ENCODE measurements at regions of chr6 and their contacts with region 1.

Region 1: DNA sequence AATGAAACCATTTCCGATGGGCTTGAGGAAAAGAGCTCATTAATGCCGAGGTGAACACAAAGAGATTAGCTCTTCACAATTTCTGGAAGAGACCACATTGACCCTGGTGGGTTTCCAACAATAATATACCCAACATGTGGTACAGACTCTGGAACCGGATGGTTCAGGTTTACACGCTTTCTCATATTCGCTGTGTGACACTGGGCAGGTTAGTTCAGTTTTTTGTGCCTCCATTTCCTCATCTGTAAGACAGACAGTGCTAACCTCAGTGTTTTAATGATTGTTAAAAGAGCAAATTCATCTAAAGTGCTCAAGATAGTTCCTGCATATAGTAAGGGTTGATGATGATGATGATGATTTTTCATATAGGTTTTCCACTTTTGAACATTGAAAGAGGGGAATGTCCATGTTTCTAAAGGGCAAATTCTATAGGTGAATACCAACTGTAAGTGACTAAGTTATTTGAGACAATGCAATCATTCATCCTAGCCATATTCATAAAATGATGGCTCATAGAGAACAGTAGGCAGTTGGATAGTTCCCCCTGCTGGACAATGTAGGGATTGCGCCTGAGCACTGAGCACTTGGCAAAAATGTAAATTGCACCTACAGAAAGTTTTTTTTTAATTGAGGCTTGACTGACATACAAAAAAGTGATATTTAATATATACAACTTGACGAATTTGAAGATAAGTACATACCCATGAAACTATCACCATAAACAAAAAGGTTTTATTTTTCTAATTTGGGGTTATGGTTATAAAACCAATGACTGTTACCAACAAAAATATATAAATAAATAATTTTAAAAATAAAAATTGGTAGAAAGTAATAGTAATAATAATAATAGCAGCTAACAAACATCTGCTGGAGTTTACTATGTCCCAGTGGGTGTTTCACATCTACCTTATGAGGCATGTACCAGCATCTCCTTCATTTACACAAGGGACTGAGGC is 2.1 kb upstream of the PERP start:
- DNase-seq: peak; percentile 50
- ATAC-seq: peak; percentile 73
- H3K4me3 Mint-ChIP-seq: peak overlapping the region; percentile 39
- H3K27ac Mint-ChIP-seq: no peak overlapping the region
- H3K4me1 Mint-ChIP-seq: peaks cover 17% of the 10 kb centered on the region
- H3K27me3 Mint-ChIP-seq: peaks cover 28% of the 10 kb centered on the region
- CTCF ChIP-seq: peak; percentile 93

Region 2: GRCh38 chr6:137497721-137498463 is 611.4 kb before region 1 on chr6:
- CTCF ChIA-PET with region 1: no interaction called
- POLR2A ChIA-PET with region 1: no interaction called
- intact Hi-C with region 1: loop called (anchors 5 kb)
- DNase-seq: peak; percentile 37
- ATAC-seq: peak; percentile 34
- H3K4me3 Mint-ChIP-seq: peak overlapping the region; percentile 66
- H3K27ac Mint-ChIP-seq: no peak overlapping the region
- H3K4me1 Mint-ChIP-seq: peaks cover 44% of the 10 kb centered on the region
- H3K27me3 Mint-ChIP-seq: peaks cover 61% of the 10 kb centered on the region
- CTCF ChIP-seq: no peak

Region 3: DNA sequence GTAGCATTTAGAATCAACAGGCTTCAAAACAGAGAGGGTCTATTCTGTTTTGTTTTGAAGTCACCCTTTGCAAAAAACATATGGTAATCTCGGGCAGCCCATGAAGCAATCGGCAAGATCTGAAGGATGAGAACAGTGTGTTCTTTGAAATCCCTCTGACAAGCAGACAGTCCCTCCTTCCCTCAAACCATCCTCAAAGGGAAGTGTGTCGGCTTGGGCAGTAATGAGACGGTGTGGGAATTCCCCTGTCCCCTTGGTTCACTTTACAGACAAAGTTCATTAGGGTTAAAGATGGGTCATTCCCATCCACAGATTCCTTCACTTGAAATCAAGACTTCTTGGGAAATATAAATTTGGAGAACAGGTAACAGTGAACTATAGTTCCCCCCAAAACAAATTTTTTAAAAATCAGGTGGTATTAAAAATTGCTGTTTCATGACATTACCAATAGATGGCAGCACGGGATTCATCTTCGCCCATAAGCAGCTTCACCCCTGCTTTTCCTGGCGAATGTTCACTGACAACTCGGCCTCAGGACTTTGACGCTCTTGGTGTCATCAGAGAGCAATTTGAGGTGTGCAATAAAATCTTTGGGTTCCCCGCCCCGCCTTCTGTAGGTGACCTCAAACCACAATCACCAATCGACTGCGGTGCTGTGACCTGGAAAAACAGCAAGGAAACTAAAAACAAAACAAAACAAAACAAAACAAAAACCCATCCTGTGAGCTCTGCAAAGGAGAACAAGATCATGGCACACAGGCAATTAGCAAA is 401.5 kb before region 1 on chr6:
- CTCF ChIA-PET with region 1: interaction called, 6 read pairs
- POLR2A ChIA-PET with region 1: no interaction called
- intact Hi-C with region 1: loop called (anchors 1 kb)
- DNase-seq: peak; percentile 27
- ATAC-seq: peak; percentile 75
- H3K4me3 Mint-ChIP-seq: peak overlapping the region; percentile 57
- H3K27ac Mint-ChIP-seq: peak overlapping the region; percentile 85
- H3K4me1 Mint-ChIP-seq: peaks cover 59% of the 10 kb centered on the region
- H3K27me3 Mint-ChIP-seq: no peaks in the 10 kb centered on the region
- CTCF ChIP-seq: peak; percentile 38

Region 4: GRCh38 chr6:137873273-137873762 is 236.0 kb before region 1 on chr6:
- CTCF ChIA-PET with region 1: no interaction called
- POLR2A ChIA-PET with region 1: no interaction called
- intact Hi-C with region 1: loop called (anchors 2 kb)
- DNase-seq: peak; percentile 50
- ATAC-seq: peak; percentile 84
- H3K4me3 Mint-ChIP-seq: peak overlapping the region; percentile 96
- H3K27ac Mint-ChIP-seq: peak overlapping the region; percentile 94
- H3K4me1 Mint-ChIP-seq: peaks cover 80% of the 10 kb centered on the region
- H3K27me3 Mint-ChIP-seq: no peaks in the 10 kb centered on the region
- CTCF ChIP-seq: no peak

Region 5: DNA sequence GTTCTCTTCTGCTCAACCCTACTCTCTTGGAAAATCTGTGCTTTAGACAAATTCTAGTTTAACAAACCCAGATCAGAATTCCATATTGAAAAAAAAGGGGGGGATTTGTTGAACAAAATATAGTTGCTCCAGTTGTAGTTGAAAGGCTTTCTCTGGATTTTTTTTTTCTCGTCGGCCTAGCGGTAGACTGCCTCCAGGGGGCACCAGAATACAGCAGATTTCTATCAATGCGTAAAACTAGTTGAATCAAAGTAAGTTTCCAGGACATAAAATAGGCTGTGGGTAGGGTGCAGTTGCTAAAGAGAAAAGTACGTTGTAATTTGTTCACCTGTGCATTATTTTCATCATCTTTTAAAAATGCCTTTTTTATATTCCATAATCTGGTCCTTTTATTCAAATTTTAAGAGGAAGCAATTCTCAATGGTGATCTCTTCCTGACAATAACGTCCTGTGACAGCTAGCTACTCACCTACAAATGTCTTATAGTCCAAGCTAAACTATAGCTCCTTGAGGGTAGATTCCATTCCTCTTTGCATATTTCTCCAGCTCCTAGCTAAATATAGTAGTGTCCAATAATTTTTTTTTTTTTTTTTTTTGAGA is 107.5 kb before region 1 on chr6:
- CTCF ChIA-PET with region 1: interaction called, 17 read pairs
- POLR2A ChIA-PET with region 1: no interaction called
- intact Hi-C with region 1: loop called (anchors 1 kb)
- DNase-seq: no peak
- ATAC-seq: peak; percentile 57
- H3K4me3 Mint-ChIP-seq: no peak overlapping the region
- H3K27ac Mint-ChIP-seq: no peak overlapping the region
- H3K4me1 Mint-ChIP-seq: peaks cover 3% of the 10 kb centered on the region
- H3K27me3 Mint-ChIP-seq: peaks cover 5% of the 10 kb centered on the region
- CTCF ChIP-seq: peak; percentile 98

Region 6: GRCh38 chr6:138692058-138692977 is 583.0 kb after region 1 on chr6:
- CTCF ChIA-PET with region 1: no interaction called
- POLR2A ChIA-PET with region 1: no interaction called
- intact Hi-C with region 1: loop called (anchors 5 kb)
- DNase-seq: peak; percentile 75
- ATAC-seq: peak; percentile 79
- H3K4me3 Mint-ChIP-seq: peak overlapping the region; percentile 87
- H3K27ac Mint-ChIP-seq: no peak overlapping the region
- H3K4me1 Mint-ChIP-seq: peaks cover 11% of the 10 kb centered on the region
- H3K27me3 Mint-ChIP-seq: peaks cover 31% of the 10 kb centered on the region
- CTCF ChIP-seq: peak; percentile 63

Measured in activated B cell treated with CpG ODN at 0.5 μM for 24 hours (primary cell).